ENCODE measurements at regions of chr9 and their contacts with region 1.

Region 1: GRCh38 chr9:97982683-97983588 is at the start of gene ANP32B:
- DNase-seq: peak; percentile 98
- H3K4me3 Mint-ChIP-seq: peak within 1 kb of the TSS; percentile 86
- H3K27ac Mint-ChIP-seq: peak within 1 kb of the TSS; percentile 91
- H3K4me1 Mint-ChIP-seq: peaks cover 31% of the 10 kb centered on the region
- H3K27me3 Mint-ChIP-seq: no peaks in the 10 kb centered on the region
- total RNA-seq, gene ANP32B: 332 and 333 TPM in 2 replicates

Region 2: GRCh38 chr9:97632985-97633858 is 349.7 kb before region 1 on chr9 and contains the starts of genes NCBP1 and TSTD2:
- intact Hi-C with region 1: loop called (anchors 1 kb)
- DNase-seq: peak; percentile 99
- H3K4me3 Mint-ChIP-seq: peak within 1 kb of the TSS; percentile 95
- H3K27ac Mint-ChIP-seq: peak within 1 kb of the TSS; percentile 99
- H3K4me1 Mint-ChIP-seq: peaks cover 40% of the 10 kb centered on the region
- H3K27me3 Mint-ChIP-seq: no peaks in the 10 kb centered on the region
- total RNA-seq, gene NCBP1: 48.9 and 51.4 TPM in 2 replicates
- total RNA-seq, gene TSTD2: 17.1 and 17.7 TPM in 2 replicates

Region 3: DNA sequence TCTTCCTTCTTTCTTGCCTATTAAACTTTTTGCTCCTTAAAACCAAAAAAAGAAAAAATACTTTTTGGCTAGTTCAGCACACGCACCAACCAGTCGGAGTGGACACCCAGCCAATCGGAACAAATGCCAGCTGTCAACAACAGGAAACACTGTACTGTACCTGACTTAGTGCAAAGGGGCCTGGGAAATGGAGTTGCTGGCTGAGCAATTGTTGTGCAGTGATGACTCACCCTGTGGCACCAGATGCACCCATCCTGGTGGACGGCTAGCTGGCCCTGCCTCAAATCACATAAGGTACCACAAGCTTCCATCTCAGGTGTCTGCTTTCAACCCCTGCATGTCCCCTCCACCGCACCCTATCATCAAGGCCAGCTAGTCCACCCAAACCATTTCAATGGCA is 109.1 kb before region 1 on chr9:
- intact Hi-C with region 1: no loop called
- DNase-seq: peak; percentile 48
- H3K4me3 Mint-ChIP-seq: no peak overlapping the region
- H3K27ac Mint-ChIP-seq: no peak overlapping the region
- H3K4me1 Mint-ChIP-seq: no peaks in the 10 kb centered on the region
- H3K27me3 Mint-ChIP-seq: peaks cover 15% of the 10 kb centered on the region

Region 4: GRCh38 chr9:97890038-97890437 is 92.9 kb before region 1 on chr9:
- intact Hi-C with region 1: no loop called
- DNase-seq: peak; percentile 91
- H3K4me3 Mint-ChIP-seq: no peak overlapping the region
- H3K27ac Mint-ChIP-seq: no peak overlapping the region
- H3K4me1 Mint-ChIP-seq: peaks cover 6% of the 10 kb centered on the region
- H3K27me3 Mint-ChIP-seq: peaks cover 3% of the 10 kb centered on the region

Region 5: GRCh38 chr9:98009936-98010335 is 27.0 kb after region 1 on chr9:
- intact Hi-C with region 1: loop called (anchors 2 kb)
- DNase-seq: no peak
- H3K4me3 Mint-ChIP-seq: no peak overlapping the region
- H3K27ac Mint-ChIP-seq: no peak overlapping the region
- H3K4me1 Mint-ChIP-seq: peaks cover 22% of the 10 kb centered on the region
- H3K27me3 Mint-ChIP-seq: no peaks in the 10 kb centered on the region

Region 6: GRCh38 chr9:98034593-98035546 is 51.9 kb after region 1 on chr9:
- intact Hi-C with region 1: loop called (anchors 2 kb)
- DNase-seq: peak; percentile 96
- H3K4me3 Mint-ChIP-seq: peak overlapping the region; percentile 22
- H3K27ac Mint-ChIP-seq: no peak overlapping the region
- H3K4me1 Mint-ChIP-seq: peaks cover 15% of the 10 kb centered on the region
- H3K27me3 Mint-ChIP-seq: no peaks in the 10 kb centered on the region

Region 7: GRCh38 chr9:98045234-98046179 is 62.6 kb after region 1 on chr9:
- intact Hi-C with region 1: loop called (anchors 5 kb)
- DNase-seq: peak; percentile 87
- H3K4me3 Mint-ChIP-seq: peak overlapping the region; percentile 87
- H3K27ac Mint-ChIP-seq: peak overlapping the region; percentile 86
- H3K4me1 Mint-ChIP-seq: peaks cover 28% of the 10 kb centered on the region
- H3K27me3 Mint-ChIP-seq: no peaks in the 10 kb centered on the region

Region 8: GRCh38 chr9:98056269-98057137 is 73.6 kb after region 1 on chr9 and contains the start of gene NANS:
- intact Hi-C with region 1: loop called (anchors 1 kb)
- DNase-seq: peak; percentile 98
- H3K4me3 Mint-ChIP-seq: peak within 1 kb of the TSS; percentile 93
- H3K27ac Mint-ChIP-seq: peak within 1 kb of the TSS; percentile 97
- H3K4me1 Mint-ChIP-seq: peaks cover 33% of the 10 kb centered on the region
- H3K27me3 Mint-ChIP-seq: no peaks in the 10 kb centered on the region
- total RNA-seq, gene NANS: 54.0 and 57.1 TPM in 2 replicates

Region 9: GRCh38 chr9:98118640-98119601 is 136.0 kb after region 1 on chr9 and contains the start of gene TRIM14:
- intact Hi-C with region 1: loop called (anchors 5 kb)
- DNase-seq: peak; percentile 93
- H3K4me3 Mint-ChIP-seq: peak within 1 kb of the TSS; percentile 87
- H3K27ac Mint-ChIP-seq: peak within 1 kb of the TSS; percentile 89
- H3K4me1 Mint-ChIP-seq: peaks cover 36% of the 10 kb centered on the region
- H3K27me3 Mint-ChIP-seq: no peaks in the 10 kb centered on the region
- total RNA-seq, gene TRIM14: 47.3 and 47.8 TPM in 2 replicates

Measured in activated CD4-positive, alpha-beta T cell treated with anti-CD3 and anti-CD28 coated beads, Interleukin-2, amount 10 ng/mL, durations not matched to agents 24 days and 14 days (primary cell).